Activated CD8-positive, alpha-beta T cell treated with anti-CD3 and anti-CD28 coated beads, Interleukin-2, amount 10 ng/mL, durations not matched to agents 7 days and 5 days (primary cell): ENCODE measurements at regions of chr10 and their contacts with region 1.

Region 1: GRCh38 chr10:91163269-91163868 is 57.1 kb upstream of the PCGF5 start:
- DNase-seq: peak; percentile 84
- ATAC-seq: peak; percentile 70
- H3K4me3 Mint-ChIP-seq: peak overlapping the region; percentile 84
- H3K27ac Mint-ChIP-seq: peak overlapping the region; percentile 83
- H3K4me1 Mint-ChIP-seq: peaks cover 32% of the 10 kb centered on the region
- H3K27me3 Mint-ChIP-seq: no peaks in the 10 kb centered on the region

Region 2: GRCh38 chr10:91198781-91199180 is 35.4 kb after region 1 on chr10:
- CTCF ChIA-PET with region 1: interaction called, 6 read pairs
- POLR2A ChIA-PET with region 1: interaction called, 29 read pairs
- DNase-seq: peak; percentile 53
- ATAC-seq: peak; percentile 59
- H3K4me3 Mint-ChIP-seq: peak overlapping the region; percentile 2
- H3K27ac Mint-ChIP-seq: peak overlapping the region; percentile 76
- H3K4me1 Mint-ChIP-seq: peaks cover 75% of the 10 kb centered on the region
- H3K27me3 Mint-ChIP-seq: no peaks in the 10 kb centered on the region